Heart right ventricle (tissue), 16 donors: ENCODE measurements at regions of chr6 and their contacts with region 1.

Region 1: DNA sequence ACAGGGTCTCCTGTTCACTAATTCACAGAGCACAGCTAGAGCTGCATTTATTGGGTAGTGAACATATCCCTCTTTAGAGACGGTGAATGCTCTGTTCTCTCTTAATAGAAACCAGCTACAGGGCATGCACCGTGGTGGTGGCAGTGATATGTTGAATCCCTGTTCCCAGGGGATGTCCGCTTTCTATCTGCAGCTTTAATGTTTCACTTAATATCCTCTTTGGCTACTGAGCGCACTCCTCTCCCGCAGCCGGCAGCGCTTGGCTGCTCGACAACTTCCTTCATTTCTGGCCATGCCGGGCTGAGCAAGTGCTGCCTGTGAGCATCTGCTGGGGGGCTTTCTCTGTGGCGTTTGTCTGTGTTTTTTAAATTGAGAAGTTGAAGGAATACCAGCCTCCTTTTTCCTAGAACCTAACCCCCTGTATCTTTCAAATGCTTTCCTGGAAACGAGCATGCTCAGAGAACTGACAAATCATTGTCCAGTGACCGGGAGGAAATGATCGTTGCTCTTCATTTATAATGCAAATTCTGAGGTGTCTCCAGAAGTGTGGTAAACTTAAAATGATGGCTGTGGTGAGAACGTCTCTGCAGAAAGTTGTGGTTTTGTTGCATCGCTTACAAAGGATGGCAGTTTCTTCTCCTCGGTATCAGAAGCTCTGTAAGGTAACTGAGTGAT is 297.9 kb downstream of the UTRN start:
- DNase-seq: peak; percentile 32 to 44
- ATAC-seq: peak; percentile 45 to 84 (median 74)
- H3K4me3 ChIP-seq: peak overlapping the region in 4 of 10 donors; percentile 2 to 24 (median 16)
- H3K27ac ChIP-seq: peak overlapping the region in 1 of 10 donors; percentile 42
- H3K4me1 ChIP-seq: peaks cover 2 to 57% (median 25%) of the 10 kb centered on the region in 9 donors
- H3K27me3 ChIP-seq: no peaks in the 10 kb centered on the region
- CTCF ChIP-seq: no peak

Region 2: DNA sequence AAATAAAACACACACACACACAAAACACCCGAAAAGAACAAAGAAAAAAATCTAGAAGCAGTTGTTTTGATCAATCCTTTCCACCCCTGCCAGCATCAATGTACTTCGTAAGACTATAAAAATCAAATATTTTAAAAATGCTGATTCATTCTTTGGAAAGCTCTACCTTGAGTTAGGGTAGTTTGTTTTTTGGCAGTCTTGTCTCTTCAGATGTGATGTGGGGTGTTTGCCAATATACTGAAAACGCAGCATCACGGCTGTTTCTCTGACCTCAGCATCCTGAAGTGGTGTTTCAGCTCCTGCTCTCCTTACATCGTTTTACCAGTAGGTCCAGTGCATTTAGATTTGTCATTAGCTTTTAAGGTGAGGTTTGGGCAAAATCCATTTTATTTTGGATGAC is 228.1 kb after region 1 on chr6:
- intact Hi-C with region 1: loop called in 1 of 10 experiments (anchors 10 kb)
- DNase-seq: no peak
- ATAC-seq: no peak
- H3K4me3 ChIP-seq: no peak overlapping the region
- H3K27ac ChIP-seq: no peak overlapping the region
- H3K4me1 ChIP-seq: peaks cover 0 to 9% (median 0%) of the 10 kb centered on the region in 9 donors
- H3K27me3 ChIP-seq: no peaks in the 10 kb centered on the region
- CTCF ChIP-seq: no peak

Region 3: DNA sequence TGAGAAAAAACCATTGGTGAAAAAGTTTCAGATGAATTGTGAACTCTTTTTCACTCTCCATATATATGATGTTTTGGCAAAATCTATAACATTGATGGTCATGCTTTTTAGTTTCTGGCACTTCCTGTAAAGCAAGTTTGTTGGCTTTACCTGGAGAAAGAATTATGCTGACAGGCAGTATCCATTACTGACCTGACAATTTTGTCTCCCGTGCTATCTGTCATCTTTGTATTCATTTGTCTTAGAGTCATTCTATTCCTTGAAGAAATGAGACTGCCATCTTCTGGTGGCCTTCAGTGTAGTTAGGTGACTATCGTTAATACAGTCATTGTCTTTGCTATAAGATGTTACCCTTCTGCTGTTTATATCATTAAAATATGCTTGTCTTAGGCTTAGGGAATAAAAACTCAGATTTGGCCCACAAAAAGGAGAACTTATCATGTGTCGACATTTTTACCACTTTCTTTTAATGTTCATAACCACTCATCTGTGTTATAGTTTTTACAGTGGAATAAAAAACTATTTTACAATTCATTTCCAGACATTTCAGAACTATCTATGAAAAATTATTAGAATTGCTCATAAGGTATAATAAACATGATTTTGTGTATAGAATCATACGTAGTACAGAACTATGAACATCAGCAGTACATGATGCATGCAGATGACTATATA is 445.2 kb after region 1 on chr6:
- intact Hi-C with region 1: loop called in 4 of 10 experiments (anchors 5 to 10 kb)
- DNase-seq: no peak
- ATAC-seq: peak in 4 of 8 donors; percentile 42 to 57 (median 56)
- H3K4me3 ChIP-seq: no peak overlapping the region
- H3K27ac ChIP-seq: no peak overlapping the region
- H3K4me1 ChIP-seq: peaks cover 0 to under 1% (median 0%) of the 10 kb centered on the region in 9 donors
- H3K27me3 ChIP-seq: no peaks in the 10 kb centered on the region
- CTCF ChIP-seq: peak in 6 of 9 donors; percentile 34 to 64 (median 56)

Region 4: GRCh38 chr6:145137426-145137825 is 554.4 kb after region 1 on chr6:
- intact Hi-C with region 1: loop called in 2 of 10 experiments (anchors 10 kb)
- DNase-seq: no peak
- ATAC-seq: no peak
- H3K4me3 ChIP-seq: no peak overlapping the region
- H3K27ac ChIP-seq: no peak overlapping the region
- H3K4me1 ChIP-seq: no peaks in the 10 kb centered on the region
- H3K27me3 ChIP-seq: no peaks in the 10 kb centered on the region
- CTCF ChIP-seq: peak in 3 of 9 donors; percentile 29 to 37 (median 34)

Region 5: DNA sequence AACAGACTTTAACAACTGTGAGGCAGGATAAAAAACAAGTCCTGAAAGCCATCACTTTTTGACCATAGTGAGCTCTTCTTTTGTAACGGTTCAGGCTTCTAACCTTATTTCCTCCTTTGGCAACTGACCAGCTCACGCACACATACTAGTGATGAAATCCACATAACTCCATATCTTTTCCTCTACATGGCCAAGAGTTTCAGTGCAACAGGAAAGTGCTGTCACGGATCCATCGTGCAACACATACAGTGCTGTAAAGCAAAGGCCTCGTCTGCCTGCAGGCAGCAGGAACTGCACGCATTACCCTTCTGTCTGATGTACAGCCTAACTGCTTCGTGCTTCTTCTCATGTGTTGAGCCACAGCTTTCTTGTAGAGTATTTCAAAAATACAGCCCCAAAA is 1043.8 kb after region 1 on chr6:
- intact Hi-C with region 1: loop called in 8 of 10 experiments (anchors 5 to 10 kb)
- DNase-seq: no peak
- ATAC-seq: peak in 6 of 8 donors; percentile 35 to 79 (median 54)
- H3K4me3 ChIP-seq: no peak overlapping the region
- H3K27ac ChIP-seq: no peak overlapping the region
- H3K4me1 ChIP-seq: peaks cover 0 to 8% (median 0%) of the 10 kb centered on the region in 9 donors
- H3K27me3 ChIP-seq: no peaks in the 10 kb centered on the region
- CTCF ChIP-seq: no peak

Region 6: DNA sequence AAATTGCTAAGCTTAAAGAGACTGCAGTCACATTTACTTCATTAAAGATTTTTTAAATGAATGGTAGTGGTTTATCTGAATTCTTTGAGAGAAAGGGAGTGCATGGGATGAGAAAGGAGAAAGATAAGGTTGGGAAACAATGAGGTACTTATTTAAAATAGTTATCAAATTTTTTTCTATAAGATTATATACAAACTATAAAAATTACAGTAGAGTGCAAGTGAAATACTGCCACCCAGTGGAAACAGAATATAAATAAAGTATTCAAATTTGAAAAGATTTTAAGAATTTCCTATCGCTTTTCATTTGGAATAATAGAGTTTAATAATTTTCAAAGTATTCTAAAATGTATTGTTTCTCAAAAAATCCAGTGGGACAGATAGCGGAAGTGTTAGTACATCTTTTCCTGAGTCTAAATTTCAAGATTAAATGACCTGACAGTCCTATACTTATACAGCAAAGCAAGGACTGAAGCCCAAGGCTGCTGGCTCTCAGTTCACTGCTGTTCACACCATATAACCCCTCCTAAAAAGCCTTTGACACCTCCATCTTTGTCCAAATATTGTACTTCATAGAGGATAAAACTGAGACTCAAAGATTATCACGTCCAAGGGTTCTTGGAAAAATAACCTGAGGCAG is 1121.2 kb after region 1 on chr6:
- intact Hi-C with region 1: loop called in 1 of 10 experiments (anchors 10 kb)
- DNase-seq: no peak
- ATAC-seq: no peak
- H3K4me3 ChIP-seq: no peak overlapping the region
- H3K27ac ChIP-seq: no peak overlapping the region
- H3K4me1 ChIP-seq: peaks cover 0 to 25% (median 4%) of the 10 kb centered on the region in 9 donors
- H3K27me3 ChIP-seq: no peaks in the 10 kb centered on the region
- CTCF ChIP-seq: peak; percentile 10 to 72 (median 59)